ENCODE measurements at regions of chr4 and their contacts with region 1.

Region 1: DNA sequence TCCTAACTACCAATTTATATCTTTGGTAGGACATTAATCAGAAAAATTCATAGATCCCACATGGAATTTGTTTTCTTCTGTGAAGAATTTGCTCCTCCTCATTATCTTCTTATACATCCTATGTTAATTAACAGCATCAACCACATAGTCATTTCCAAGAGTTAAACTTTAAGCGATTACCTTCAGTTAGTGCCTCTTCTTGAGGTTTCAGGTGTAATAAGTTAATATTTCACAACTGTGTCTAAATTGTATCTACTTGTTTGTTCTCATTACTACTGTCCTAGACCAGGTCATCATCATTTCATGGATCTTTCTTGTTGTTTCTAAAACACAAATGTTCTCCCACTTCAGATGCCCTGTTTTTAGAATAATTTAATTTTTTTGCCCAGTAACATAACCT is 457.9 kb downstream of the FAT4 start:
- DNase-seq: no peak
- H3K4me3 ChIP-seq: no peak overlapping the region
- H3K27ac ChIP-seq: no peak overlapping the region
- H3K4me1 ChIP-seq: no peaks in the 10 kb centered on the region
- H3K27me3 ChIP-seq: no peaks in the 10 kb centered on the region
- CTCF ChIP-seq: no peak
- POLR2A ChIP-seq: no peak

Region 2: GRCh38 chr4:124427095-124427767 is 1345.4 kb before region 1 on chr4:
- intact Hi-C with region 1: no loop called
- DNase-seq: no peak
- H3K4me3 ChIP-seq: no peak overlapping the region
- H3K27ac ChIP-seq: no peak overlapping the region
- H3K4me1 ChIP-seq: no peaks in the 10 kb centered on the region
- H3K27me3 ChIP-seq: no peaks in the 10 kb centered on the region
- CTCF ChIP-seq: no peak
- POLR2A ChIP-seq: no peak

Region 3: DNA sequence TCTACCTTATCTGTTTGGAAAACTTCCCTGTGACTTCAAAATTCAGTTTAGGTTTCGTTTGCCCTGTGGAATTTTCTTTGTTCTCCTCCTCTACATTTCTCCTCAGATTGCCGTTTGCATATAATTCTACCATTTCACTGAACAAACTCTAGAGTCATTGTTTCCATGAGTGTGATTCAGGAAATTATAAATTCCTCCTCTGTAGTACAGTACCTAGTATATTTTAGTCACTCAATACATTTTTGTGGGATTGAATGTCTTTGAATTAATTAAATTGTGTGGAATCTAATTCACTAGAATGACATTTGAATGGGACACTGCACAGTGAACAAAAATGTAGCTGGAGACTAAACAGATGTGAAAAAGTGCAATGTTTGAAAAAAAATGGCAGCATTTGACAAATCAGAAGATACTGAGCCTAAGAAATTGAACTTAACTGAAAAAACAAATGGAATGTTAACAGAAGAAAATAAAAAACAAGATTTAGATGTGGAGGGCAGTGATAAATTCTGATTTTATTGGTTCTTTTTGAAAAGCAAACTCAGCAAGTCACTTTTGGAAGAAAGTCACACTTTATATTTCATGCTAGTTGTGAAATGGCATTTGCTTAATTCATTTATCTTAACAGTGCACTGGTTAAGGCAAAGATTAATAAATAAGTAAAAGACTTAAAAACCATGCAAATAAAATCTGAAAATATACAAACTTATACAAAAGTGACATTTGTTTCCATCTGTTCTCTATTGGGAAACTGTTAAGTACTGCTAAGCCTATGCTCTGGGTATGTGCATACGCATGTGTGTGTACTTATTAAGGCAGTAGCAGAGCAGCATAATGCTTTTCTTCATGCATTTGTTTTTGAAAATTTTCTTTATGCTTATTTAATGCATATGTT is 54.4 kb after region 1 on chr4:
- intact Hi-C with region 1: no loop called
- DNase-seq: no peak
- H3K4me3 ChIP-seq: no peak overlapping the region
- H3K27ac ChIP-seq: no peak overlapping the region
- H3K4me1 ChIP-seq: no peaks in the 10 kb centered on the region
- H3K27me3 ChIP-seq: no peaks in the 10 kb centered on the region
- CTCF ChIP-seq: no peak
- POLR2A ChIP-seq: no peak

Region 4: DNA sequence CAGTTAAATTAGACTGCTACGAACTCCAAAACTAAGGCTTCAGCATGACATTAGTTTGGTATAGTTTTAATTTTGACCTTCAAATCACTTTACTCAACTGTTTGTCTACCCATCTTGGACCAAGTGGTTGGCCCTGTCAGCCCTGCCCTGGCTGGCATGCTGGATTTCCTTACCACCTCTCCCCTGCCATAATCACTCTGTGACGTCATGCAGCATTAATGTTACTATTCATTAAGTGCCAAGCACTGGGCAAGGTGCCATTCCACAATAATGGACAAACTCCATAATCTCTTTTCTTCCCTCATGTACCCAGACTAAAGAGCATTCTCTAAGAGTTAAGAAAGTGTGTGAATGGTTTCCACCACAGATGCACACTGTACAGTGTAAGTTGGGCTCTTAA is 1583.1 kb after region 1 on chr4:
- intact Hi-C with region 1: loop called (anchors 5 kb)
- DNase-seq: no peak
- H3K4me3 ChIP-seq: no peak overlapping the region
- H3K27ac ChIP-seq: no peak overlapping the region
- H3K4me1 ChIP-seq: no peaks in the 10 kb centered on the region
- H3K27me3 ChIP-seq: no peaks in the 10 kb centered on the region
- CTCF ChIP-seq: no peak
- POLR2A ChIP-seq: no peak

Measured in breast epithelium (tissue), 4 donors.